Psoas muscle (tissue), 8 donors: ENCODE measurements at regions of chr11 and their contacts with region 1.

Region 1: GRCh38 chr11:66677599-66678375 is at the start of gene RBM4B:
- DNase-seq: peak; percentile 98 to 99
- ATAC-seq: peak; percentile 96 to 98 (median 96)
- H3K4me3 ChIP-seq: peak within 1 kb of the TSS; percentile 86
- H3K27ac ChIP-seq: peak within 1 kb of the TSS; percentile 93
- H3K4me1 ChIP-seq: peaks cover 30% of the 10 kb centered on the region
- H3K27me3 ChIP-seq: no peaks in the 10 kb centered on the region
- CTCF ChIP-seq: no peak
- total RNA-seq, gene RBM4B: 3.6 to 11.0 (median 8.2) TPM

Region 2: DNA sequence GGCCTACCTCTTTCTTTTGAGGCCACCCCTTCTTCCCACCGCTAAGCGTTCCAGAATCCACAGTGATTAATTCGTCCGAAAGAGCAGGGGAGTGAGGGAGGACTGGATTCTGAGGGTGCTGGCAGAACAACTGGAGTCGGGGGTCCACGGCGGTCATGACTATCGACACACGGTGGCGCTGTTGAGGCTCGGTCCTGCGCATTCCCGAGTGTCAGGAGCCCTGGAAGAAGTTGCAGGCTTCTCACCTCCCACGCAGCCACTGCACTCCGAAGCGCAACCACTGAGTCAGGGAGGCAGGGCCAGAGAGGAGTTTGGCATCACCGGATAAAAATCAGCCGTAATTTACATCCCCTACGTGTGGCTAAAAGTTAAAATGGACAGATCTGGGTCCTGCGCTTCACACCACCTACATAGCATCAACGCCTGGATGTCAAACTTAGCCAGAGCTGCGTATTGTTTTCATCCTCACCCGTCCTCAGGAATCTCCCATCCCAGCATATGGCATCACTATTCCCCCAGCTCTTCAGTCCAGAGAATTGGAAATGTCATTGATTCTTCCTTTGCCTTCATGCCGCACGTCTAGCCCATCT is 98.7 kb before region 1 on chr11:
- intact Hi-C with region 1: loop called (anchors 1 to 2 kb)
- DNase-seq: peak; percentile 83 to 86
- ATAC-seq: peak; percentile 74 to 95 (median 92)
- H3K4me3 ChIP-seq: no peak overlapping the region
- H3K27ac ChIP-seq: no peak overlapping the region
- H3K4me1 ChIP-seq: no peaks in the 10 kb centered on the region
- H3K27me3 ChIP-seq: no peaks in the 10 kb centered on the region
- CTCF ChIP-seq: peak; percentile 75

Region 3: DNA sequence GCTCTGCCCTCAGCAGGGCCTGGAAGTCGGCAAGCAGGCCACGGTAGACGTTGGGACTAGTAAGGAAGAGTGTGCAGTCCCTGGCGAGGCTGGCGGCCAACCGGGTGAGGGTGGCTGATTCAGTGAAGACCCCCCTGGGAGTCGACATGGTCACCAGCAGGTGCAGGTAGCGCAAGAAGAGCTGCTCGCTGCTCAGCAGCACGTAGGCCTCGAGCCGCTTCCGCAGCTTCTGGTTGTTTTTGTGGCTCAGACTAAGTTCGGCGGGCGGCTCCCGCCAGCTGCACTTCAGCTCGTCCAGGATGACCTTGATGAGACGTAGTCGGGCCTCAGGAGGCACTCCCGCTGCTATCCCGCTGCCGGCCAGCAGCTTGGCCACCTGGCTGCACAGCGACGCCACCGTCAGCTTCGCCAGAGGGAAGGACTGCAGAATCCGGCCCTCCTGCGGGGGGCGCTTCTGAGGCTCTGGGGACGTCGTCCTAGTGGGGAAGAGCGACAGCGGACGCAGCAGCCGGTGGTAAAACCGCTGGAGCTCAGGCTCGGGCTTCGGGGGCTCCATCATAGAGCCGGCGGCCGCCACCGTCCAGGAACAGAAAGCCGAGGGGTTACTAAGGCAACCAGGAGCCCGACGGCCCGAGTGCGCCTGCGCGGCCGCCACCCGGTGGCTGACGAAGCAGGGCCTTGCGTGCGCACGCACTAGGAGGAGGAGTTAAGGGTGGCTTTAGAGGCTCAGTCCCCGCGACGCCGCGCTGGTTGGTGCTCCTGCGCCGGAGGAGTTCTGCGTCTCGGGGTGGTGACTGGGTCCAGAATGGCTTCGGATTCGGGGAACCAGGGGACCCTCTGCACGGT is 85.1 kb before region 1 on chr11 and contains the starts of genes CCDC87 and CCS:
- intact Hi-C with region 1: loop called in 1 of 2 experiments (anchors 5 kb)
- DNase-seq: peak; percentile 98 to 99
- ATAC-seq: peak; percentile 98 to 99 (median 98)
- H3K4me3 ChIP-seq: peak within 1 kb of the TSS; percentile 92
- H3K27ac ChIP-seq: peak within 1 kb of the TSS; percentile 84
- H3K4me1 ChIP-seq: peaks cover 15% of the 10 kb centered on the region
- H3K27me3 ChIP-seq: no peaks in the 10 kb centered on the region
- CTCF ChIP-seq: peak; percentile 66
- total RNA-seq, gene CCDC87: 0.36 to 0.46 (median 0.36) TPM in 3 of 4 donors, not detected in the other
- total RNA-seq, gene CCS: 10.5 to 17.0 (median 14.8) TPM

Region 4: DNA sequence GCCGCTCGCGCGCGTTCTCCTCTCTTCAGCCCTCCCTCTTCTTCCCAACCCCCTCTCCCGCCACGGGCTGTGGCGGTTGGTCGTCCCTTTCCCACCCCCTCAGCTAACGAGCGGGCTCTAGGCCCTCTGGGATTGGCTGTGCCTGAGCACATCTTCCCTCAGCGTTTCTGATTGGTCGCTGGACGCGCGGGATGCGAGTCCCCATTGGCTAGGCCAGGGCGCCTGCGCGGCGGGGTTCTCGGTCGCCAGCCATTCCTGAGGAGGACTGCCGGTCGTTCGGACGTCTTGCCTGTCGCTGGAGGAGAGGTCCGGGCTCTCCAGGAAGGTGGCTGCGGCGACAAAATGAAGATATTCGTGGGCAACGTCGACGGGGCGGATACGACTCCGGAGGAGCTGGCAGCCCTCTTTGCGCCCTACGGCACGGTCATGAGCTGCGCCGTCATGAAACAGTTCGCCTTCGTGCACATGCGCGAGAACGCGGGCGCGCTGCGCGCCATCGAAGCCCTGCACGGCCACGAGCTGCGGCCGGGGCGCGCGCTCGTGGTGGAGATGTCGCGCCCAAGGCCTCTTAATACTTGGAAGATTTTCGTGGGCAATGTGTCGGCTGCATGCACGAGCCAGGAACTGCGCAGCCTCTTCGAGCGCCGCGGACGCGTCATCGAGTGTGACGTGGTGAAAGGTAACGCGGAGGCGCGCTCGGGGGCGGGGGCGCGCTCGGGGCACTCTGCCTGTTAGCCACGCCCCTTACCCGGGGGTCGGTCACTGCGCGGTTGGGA is 61.2 kb before region 1 on chr11 and contains the start of gene RBM14:
- intact Hi-C with region 1: loop called in 1 of 2 experiments (anchors 1 kb)
- DNase-seq: peak; percentile 99 to 100
- ATAC-seq: peak; percentile 95 to 99 (median 98)
- H3K4me3 ChIP-seq: peak within 1 kb of the TSS; percentile 98
- H3K27ac ChIP-seq: peak within 1 kb of the TSS; percentile 99
- H3K4me1 ChIP-seq: peaks cover 40% of the 10 kb centered on the region
- H3K27me3 ChIP-seq: no peaks in the 10 kb centered on the region
- CTCF ChIP-seq: no peak
- total RNA-seq, gene RBM14: 21.1 to 39.3 (median 34.0) TPM

Region 5: DNA sequence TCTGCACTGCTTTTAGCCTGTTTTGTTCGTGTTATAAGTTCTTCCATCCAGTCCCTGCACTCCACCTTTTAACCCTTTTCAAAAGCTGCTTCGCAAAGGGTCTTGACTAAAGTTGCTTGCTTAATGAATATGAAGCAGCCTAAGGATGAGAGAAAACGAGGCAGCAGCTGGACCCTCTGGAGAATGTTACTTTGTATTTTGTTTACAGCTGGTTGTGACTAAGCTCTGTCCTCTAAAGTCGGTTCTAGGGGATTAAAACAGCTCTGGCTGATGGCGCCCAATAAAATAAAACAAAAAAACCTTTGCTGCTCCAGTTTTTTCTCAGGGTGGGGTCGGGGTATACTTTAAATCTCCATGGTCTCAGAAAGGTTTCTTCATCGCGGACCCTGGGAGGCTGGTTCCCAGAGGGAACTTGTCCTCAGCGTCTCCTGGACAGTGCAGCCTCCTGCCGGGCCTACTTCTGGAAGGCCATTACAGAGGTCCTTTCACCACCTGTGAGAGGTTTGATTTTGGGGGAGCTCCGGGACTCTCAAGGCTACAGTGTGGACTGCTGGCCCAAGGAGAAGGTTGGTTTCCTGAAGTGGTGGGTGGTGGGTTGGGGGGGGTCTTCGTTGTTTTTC is 40.1 kb before region 1 on chr11:
- intact Hi-C with region 1: loop called (anchors 5 kb)
- DNase-seq: no peak
- ATAC-seq: peak; percentile 6 to 25 (median 14)
- H3K4me3 ChIP-seq: peak overlapping the region; percentile 87
- H3K27ac ChIP-seq: peak overlapping the region; percentile 91
- H3K4me1 ChIP-seq: peaks cover 38% of the 10 kb centered on the region
- H3K27me3 ChIP-seq: no peaks in the 10 kb centered on the region
- CTCF ChIP-seq: no peak

Region 6: GRCh38 chr11:66842896-66843775 is 165.3 kb after region 1 on chr11 and contains the start of gene RCE1:
- intact Hi-C with region 1: no loop called
- DNase-seq: peak; percentile 90 to 95
- ATAC-seq: peak; percentile 96 to 99 (median 98)
- H3K4me3 ChIP-seq: peak within 1 kb of the TSS; percentile 99
- H3K27ac ChIP-seq: peak within 1 kb of the TSS; percentile 98
- H3K4me1 ChIP-seq: peaks cover 22% of the 10 kb centered on the region
- H3K27me3 ChIP-seq: no peaks in the 10 kb centered on the region
- CTCF ChIP-seq: no peak
- total RNA-seq, gene RCE1: 3.1 to 5.0 (median 4.3) TPM